ENCODE measurements at regions of chr22 and their contacts with region 1.

Region 1: DNA sequence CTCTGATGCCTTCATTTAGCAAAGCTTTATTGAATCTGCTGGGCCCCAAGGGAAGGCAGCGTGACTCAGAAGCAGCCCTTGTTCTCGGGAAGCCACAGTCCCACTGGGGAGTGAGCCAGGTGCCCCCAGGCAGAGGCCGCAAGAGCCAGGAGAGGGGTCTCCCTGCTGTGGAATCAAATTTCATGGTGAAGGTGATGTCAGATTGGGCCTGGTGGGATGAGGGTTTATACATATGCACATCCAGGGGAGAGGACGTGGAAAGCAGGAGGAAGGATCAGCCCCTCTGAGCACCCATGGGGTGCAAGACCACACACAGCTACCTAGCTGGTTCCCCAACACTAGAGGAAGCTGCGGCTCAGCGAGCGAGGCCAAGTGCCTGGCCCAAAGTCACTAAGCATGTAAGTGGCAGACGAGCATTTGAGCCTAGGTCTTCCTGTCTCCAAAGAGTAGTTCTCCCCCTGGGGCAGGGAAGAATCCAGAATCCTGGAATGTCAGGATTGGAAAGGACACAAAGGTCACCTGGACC is 2.0 kb downstream of the SYNGR1 start:
- DNase-seq: peak; percentile 79
- ATAC-seq: peak; percentile 74
- H3K4me3 Mint-ChIP-seq: peak overlapping the region; percentile 72
- H3K27ac Mint-ChIP-seq: peak overlapping the region; percentile 81
- H3K4me1 Mint-ChIP-seq: peaks cover 31% of the 10 kb centered on the region
- H3K27me3 Mint-ChIP-seq: peaks cover 27% of the 10 kb centered on the region

Region 2: GRCh38 chr22:39332441-39333064 is 19.2 kb before region 1 on chr22:
- CTCF ChIA-PET with region 1: interaction called, 11 read pairs
- DNase-seq: no peak
- ATAC-seq: no peak
- H3K4me3 Mint-ChIP-seq: no peak overlapping the region
- H3K27ac Mint-ChIP-seq: no peak overlapping the region
- H3K4me1 Mint-ChIP-seq: peaks cover 7% of the 10 kb centered on the region
- H3K27me3 Mint-ChIP-seq: peaks cover 3% of the 10 kb centered on the region

Region 3: DNA sequence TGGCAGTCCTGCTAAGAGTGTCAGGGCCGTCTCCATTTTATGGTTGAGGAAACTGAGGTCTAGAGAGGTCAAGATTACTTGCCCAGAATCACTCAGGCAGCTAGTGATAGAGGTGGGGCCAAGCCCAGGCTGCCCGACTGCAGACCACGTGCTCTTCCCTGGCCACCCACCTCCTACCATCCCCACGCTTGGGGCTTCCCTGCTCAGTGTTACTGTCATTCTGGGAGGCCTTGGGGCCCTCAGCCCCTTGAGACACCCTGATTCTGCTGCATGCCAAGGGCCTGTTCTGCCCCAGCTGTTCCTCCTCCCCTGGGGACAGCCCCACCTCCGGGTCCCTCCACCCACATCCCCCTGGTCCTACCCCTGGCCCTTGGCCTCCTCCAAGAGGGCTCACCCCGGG is 30.7 kb after region 1 on chr22:
- CTCF ChIA-PET with region 1: no interaction called
- DNase-seq: no peak
- ATAC-seq: peak; percentile 33
- H3K4me3 Mint-ChIP-seq: no peak overlapping the region
- H3K27ac Mint-ChIP-seq: no peak overlapping the region
- H3K4me1 Mint-ChIP-seq: peaks cover 8% of the 10 kb centered on the region
- H3K27me3 Mint-ChIP-seq: no peaks in the 10 kb centered on the region